PC-9 (cell line): ENCODE measurements at regions of chr1 and their contacts with region 1.

Region 1: GRCh38 chr1:161824618-161825017 is 58.5 kb downstream of the ATF6 start:
- DNase-seq: no peak
- H3K4me3 ChIP-seq: no peak overlapping the region
- H3K27ac ChIP-seq: no peak overlapping the region
- H3K4me1 ChIP-seq: no peaks in the 10 kb centered on the region
- H3K27me3 ChIP-seq: no peaks in the 10 kb centered on the region
- CTCF ChIP-seq: no peak

Region 2: GRCh38 chr1:159996653-159997052 is 1828.0 kb before region 1 on chr1:
- CTCF ChIA-PET with region 1: no interaction called
- POLR2A ChIA-PET with region 1: no interaction called
- intact Hi-C with region 1: no loop called
- DNase-seq: peak; percentile 37 to 86
- H3K4me3 ChIP-seq: no peak overlapping the region
- H3K27ac ChIP-seq: peak overlapping the region; percentile 25; the same call in 1 of the 2 replicates
- H3K4me1 ChIP-seq: peaks cover 28% of the 10 kb centered on the region
- H3K27me3 ChIP-seq: no peaks in the 10 kb centered on the region
- CTCF ChIP-seq: no peak

Region 3: GRCh38 chr1:161805399-161806197 is 19.0 kb before region 1 on chr1:
- CTCF ChIA-PET with region 1: no interaction called
- POLR2A ChIA-PET with region 1: no interaction called
- intact Hi-C with region 1: loop called (anchors 2 kb)
- DNase-seq: no peak
- H3K4me3 ChIP-seq: no peak overlapping the region
- H3K27ac ChIP-seq: no peak overlapping the region
- H3K4me1 ChIP-seq: no peaks in the 10 kb centered on the region
- H3K27me3 ChIP-seq: no peaks in the 10 kb centered on the region
- CTCF ChIP-seq: no peak